Body of pancreas (tissue), 4 donors: ENCODE measurements at regions of chr1 and their contacts with region 1.

Region 1: GRCh38 chr1:9289090-9289534 is 3.6 kb upstream of the SPSB1 start:
- DNase-seq: peak; percentile 74 to 88 (median 84)
- ATAC-seq: no peak
- H3K4me3 ChIP-seq: no peak overlapping the region
- H3K27ac ChIP-seq: no peak overlapping the region
- H3K4me1 ChIP-seq: peaks cover 26% of the 10 kb centered on the region
- H3K27me3 ChIP-seq: no peaks in the 10 kb centered on the region
- CTCF ChIP-seq: peak; percentile 62 to 94 (median 91)
- POLR2A ChIP-seq: no peak

Region 2: DNA sequence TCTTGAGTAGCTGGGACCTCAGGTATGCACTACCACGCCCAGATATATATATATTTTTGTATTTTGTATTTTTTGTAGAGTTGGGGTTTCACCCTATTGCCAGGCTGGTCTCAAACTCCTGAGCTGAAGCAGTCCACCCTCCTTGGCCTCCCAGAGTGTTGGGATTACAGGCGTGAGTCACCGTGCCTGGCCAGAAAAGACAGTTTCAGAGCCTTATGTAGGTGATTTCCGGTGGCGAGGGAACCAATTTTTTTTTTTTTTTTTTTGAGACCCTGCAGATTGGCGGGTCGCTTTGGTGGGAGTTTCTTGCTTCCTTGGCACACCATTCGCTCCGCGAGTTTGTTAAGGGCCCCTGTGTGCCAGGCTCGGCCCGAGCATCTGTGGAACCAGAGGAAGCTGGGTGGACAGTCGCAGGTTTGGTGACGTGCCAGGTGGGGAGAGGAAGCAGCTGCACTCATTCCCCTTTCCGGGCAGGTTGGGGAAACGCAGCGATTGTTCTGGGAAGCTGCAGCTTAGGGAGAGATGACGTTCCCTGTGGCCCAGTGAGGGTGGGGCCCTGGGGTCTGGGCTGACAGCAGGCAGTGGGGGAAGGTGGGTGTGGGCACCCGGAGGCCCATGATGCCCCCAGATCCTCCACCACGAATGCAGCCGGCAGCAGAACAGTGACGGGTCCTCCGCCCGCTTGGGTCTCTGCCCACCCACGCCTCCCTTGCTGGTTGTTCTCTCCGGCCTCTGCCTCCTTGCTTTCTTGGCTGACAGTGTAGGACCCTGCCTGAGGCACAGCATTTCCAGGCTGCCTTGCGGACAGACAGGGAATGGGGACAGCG is 28.7 kb after region 1 on chr1:
- intact Hi-C with region 1: no loop called
- DNase-seq: peak in 2 of 4 donors; percentile 25 to 33
- ATAC-seq: no peak
- H3K4me3 ChIP-seq: no peak overlapping the region
- H3K27ac ChIP-seq: peak overlapping the region in 1 of 4 donors; percentile 0
- H3K4me1 ChIP-seq: peaks cover 29% of the 10 kb centered on the region
- H3K27me3 ChIP-seq: no peaks in the 10 kb centered on the region
- CTCF ChIP-seq: no peak
- POLR2A ChIP-seq: no peak

Region 3: GRCh38 chr1:9455487-9456234 is 166.5 kb after region 1 on chr1:
- intact Hi-C with region 1: loop called (anchors 10 kb)
- DNase-seq: peak; percentile 71 to 85 (median 76)
- ATAC-seq: peak; percentile 54
- H3K4me3 ChIP-seq: no peak overlapping the region
- H3K27ac ChIP-seq: no peak overlapping the region
- H3K4me1 ChIP-seq: peaks cover 49% of the 10 kb centered on the region
- H3K27me3 ChIP-seq: no peaks in the 10 kb centered on the region
- CTCF ChIP-seq: peak; percentile 57 to 82 (median 71)
- POLR2A ChIP-seq: no peak

Region 4: GRCh38 chr1:9486466-9487140 is 197.5 kb after region 1 on chr1:
- intact Hi-C with region 1: loop called (anchors 10 kb)
- DNase-seq: peak in 1 of 4 donors; percentile 18
- ATAC-seq: no peak
- H3K4me3 ChIP-seq: no peak overlapping the region
- H3K27ac ChIP-seq: no peak overlapping the region
- H3K4me1 ChIP-seq: peaks cover 8% of the 10 kb centered on the region
- H3K27me3 ChIP-seq: no peaks in the 10 kb centered on the region
- CTCF ChIP-seq: no peak
- POLR2A ChIP-seq: no peak